Adrenal gland (tissue), 19 donors: ENCODE measurements at regions of chr1 and their contacts with region 1.

Region 1: GRCh38 chr1:25608488-25609178 is 8.0 kb upstream of the MAN1C1 start:
- DNase-seq: peak; percentile 81 to 96 (median 88)
- H3K4me3 ChIP-seq: no peak overlapping the region
- H3K27ac ChIP-seq: no peak overlapping the region
- H3K4me1 ChIP-seq: peaks cover 0 to 13% of the 10 kb centered on the region in 2 donors
- H3K27me3 ChIP-seq: no peaks in the 10 kb centered on the region
- CTCF ChIP-seq: peak; percentile 66 to 76 (median 69)
- POLR2A ChIP-seq: no peak

Region 2: GRCh38 chr1:25458541-25459298 is 149.9 kb before region 1 on chr1:
- intact Hi-C with region 1: no loop called
- DNase-seq: no peak
- H3K4me3 ChIP-seq: no peak overlapping the region
- H3K27ac ChIP-seq: no peak overlapping the region
- H3K4me1 ChIP-seq: peaks cover 4 to 14% of the 10 kb centered on the region in 2 donors
- H3K27me3 ChIP-seq: no peaks in the 10 kb centered on the region
- CTCF ChIP-seq: no peak
- POLR2A ChIP-seq: no peak

Region 3: GRCh38 chr1:25748531-25749205 is 140.0 kb after region 1 on chr1:
- intact Hi-C with region 1: loop called in 1 of 2 experiments (anchors 5 kb)
- DNase-seq: no peak
- H3K4me3 ChIP-seq: no peak overlapping the region
- H3K27ac ChIP-seq: no peak overlapping the region
- H3K4me1 ChIP-seq: peaks cover 8 to 15% of the 10 kb centered on the region in 2 donors
- H3K27me3 ChIP-seq: no peaks in the 10 kb centered on the region
- CTCF ChIP-seq: no peak
- POLR2A ChIP-seq: no peak